ENCODE measurements at regions of chr2 and their contacts with region 1.

Region 1: DNA sequence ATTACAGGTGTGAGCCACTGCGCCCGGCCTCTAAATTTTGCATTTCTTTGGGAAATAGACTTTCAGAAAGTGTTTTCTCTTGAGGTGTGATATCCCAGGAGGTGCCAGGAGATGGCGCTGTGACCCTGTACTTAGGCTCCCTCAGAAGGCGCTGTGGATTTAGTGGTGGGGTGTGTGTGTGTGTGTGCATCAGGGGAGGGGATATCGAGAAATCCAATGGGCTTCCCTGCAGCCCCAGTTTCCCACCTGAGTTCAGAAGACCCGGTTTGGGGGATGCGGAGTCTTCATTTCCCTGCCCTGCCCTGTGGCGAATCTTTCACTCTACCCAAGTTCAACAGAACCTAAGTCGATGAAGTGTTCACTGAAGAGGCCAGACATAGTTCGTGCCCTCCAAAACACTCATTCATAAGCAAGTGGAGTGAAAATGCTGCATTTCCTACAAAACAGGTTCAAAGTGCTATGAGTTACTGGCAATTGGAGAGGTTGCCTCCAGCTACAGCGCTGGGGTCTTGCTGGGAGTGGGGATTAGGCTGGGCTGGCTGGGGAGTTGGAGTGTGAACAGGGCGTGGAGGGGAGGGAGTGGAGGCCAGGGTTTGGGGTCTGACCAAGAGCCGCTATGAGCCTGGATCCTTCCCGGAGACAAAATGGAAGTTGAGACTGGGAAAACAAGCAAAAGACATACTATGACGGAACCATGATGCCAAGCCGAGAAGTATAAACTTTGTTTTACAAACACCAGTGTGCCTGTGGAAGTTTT is 6.5 kb upstream of the WNT6 start:
- DNase-seq: peak; percentile 74
- ATAC-seq: peak; percentile 52
- H3K4me3 Mint-ChIP-seq: no peak overlapping the region
- H3K27ac Mint-ChIP-seq: no peak overlapping the region
- H3K4me1 Mint-ChIP-seq: no peaks in the 10 kb centered on the region
- H3K27me3 Mint-ChIP-seq: peaks cover 52% of the 10 kb centered on the region

Region 2: DNA sequence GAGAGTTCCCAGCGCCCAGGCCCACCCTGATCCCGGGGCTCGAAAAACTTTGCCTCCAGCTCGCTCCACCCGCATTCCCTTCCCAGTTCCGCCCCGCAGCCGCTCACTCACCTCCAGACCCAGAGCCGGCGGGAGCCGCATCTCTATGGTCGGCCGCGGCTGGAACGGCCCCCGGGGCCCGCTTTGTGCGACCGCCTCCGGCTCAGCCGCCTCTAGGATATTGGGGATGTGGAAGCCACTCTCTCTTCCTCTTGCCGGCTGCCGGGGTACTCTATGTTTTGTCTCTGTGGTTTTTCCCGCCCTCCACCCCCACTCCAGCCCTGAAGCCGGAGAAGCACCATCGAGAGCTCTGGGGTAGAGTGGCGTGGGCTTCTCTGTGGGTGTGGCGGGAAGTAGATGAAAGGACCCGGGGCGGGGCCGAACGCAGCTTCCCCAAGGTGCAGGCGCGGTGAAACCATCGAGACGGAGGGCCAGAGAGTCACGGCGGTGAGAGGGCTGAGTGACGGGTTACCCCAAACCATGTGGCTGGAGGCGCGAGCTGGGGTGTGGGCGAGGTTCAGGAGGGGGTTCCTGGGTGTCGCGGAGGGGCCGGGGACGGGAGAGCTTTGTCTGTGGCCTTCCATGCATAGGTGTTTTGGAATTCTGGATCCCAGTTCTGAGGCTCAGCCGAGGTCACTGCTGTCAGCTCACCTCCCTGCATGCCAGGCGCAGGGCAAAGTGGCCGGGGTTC is 193.7 kb before region 1 on chr2 and contains the starts of genes BCS1L and ZNF142:
- CTCF ChIA-PET with region 1: interaction called, 62 read pairs
- POLR2A ChIA-PET with region 1: no interaction called
- DNase-seq: peak; percentile 97
- ATAC-seq: peak; percentile 96
- H3K4me3 Mint-ChIP-seq: peak within 1 kb of the TSS; percentile 90
- H3K27ac Mint-ChIP-seq: peak within 1 kb of the TSS; percentile 90
- H3K4me1 Mint-ChIP-seq: peaks cover 31% of the 10 kb centered on the region
- H3K27me3 Mint-ChIP-seq: no peaks in the 10 kb centered on the region
- total RNA-seq, gene BCS1L: 50.1 to 50.5 TPM
- total RNA-seq, gene ZNF142: 49.2 to 53.1 TPM

Region 3: DNA sequence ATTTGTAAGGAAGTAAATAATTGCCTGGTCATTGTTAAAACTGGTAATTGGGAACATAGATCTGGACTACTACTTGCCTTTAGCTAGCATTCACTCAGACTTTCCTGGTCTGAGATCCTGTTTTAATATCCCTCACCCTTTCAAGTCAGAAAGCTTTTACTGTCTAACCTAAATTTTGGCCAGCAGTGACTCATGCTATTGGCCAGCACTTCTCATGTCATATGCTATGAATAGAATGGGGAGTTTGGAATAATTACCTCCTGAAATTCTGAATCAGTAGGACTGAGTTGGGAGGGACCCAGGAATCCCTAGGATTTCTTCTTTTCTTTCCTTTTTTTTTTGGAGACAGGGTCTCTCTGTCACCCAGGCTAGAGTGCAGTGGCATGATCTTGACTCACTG is 161.9 kb before region 1 on chr2:
- CTCF ChIA-PET with region 1: interaction called, 14 read pairs
- POLR2A ChIA-PET with region 1: no interaction called
- DNase-seq: no peak
- ATAC-seq: no peak
- H3K4me3 Mint-ChIP-seq: no peak overlapping the region
- H3K27ac Mint-ChIP-seq: no peak overlapping the region
- H3K4me1 Mint-ChIP-seq: peaks cover 2% of the 10 kb centered on the region
- H3K27me3 Mint-ChIP-seq: no peaks in the 10 kb centered on the region

Region 4: DNA sequence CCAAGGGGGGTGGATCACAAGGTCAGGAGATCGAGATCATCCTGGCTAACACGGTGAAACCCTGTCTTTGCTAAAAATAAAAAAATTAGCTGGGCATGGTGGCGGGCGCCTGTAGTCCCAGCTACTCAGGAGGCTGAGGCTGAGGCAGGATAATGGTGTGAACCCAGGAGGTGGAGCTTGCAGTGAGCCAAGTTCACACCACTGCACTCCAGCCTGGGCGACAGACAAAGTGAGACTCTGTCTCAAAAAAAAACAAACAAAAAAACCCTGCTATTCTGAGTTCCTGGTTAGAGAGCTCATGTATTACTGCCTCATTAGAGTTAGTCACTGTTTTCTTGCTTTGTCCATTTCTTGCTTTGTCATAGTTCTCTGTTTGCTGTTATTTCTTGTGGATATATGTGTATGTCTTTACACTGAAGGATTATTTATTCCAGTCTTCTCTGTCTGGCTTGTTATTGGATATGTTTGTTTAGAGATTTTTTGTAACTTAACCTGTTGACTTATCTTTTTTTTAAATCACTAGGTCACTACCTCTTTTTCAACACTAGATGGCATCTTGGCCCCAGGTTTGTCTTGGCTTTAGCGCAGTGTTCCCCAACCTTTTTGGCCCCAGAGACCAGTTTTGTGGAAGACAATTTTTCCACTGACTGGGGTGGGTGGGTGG is 125.5 kb before region 1 on chr2:
- CTCF ChIA-PET with region 1: interaction called, 34 read pairs
- POLR2A ChIA-PET with region 1: no interaction called
- DNase-seq: no peak
- ATAC-seq: no peak
- H3K4me3 Mint-ChIP-seq: no peak overlapping the region
- H3K27ac Mint-ChIP-seq: no peak overlapping the region
- H3K4me1 Mint-ChIP-seq: peaks cover 13% of the 10 kb centered on the region
- H3K27me3 Mint-ChIP-seq: no peaks in the 10 kb centered on the region

Region 5: DNA sequence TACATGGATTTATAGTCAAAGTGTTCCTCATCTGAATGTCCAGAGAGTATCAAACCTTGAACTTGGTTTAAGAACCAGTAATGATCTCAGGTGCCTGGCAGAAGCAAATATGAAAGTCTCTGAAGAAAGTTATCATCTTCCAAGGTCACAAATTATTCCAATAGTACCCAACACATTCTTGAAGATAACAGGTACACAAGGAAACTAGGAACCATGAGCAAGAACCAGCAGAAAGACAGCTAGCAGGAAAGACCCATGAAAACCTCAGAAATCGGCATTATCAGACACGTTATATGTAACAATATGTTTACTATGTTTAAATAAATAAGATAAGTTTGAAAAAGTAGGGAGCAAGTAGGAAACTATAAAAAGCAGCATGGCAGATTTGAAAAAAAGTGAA is 15.6 kb before region 1 on chr2:
- CTCF ChIA-PET with region 1: interaction called, 11 read pairs
- POLR2A ChIA-PET with region 1: no interaction called
- DNase-seq: no peak
- ATAC-seq: no peak
- H3K4me3 Mint-ChIP-seq: no peak overlapping the region
- H3K27ac Mint-ChIP-seq: no peak overlapping the region
- H3K4me1 Mint-ChIP-seq: no peaks in the 10 kb centered on the region
- H3K27me3 Mint-ChIP-seq: peaks cover 41% of the 10 kb centered on the region

Region 6: DNA sequence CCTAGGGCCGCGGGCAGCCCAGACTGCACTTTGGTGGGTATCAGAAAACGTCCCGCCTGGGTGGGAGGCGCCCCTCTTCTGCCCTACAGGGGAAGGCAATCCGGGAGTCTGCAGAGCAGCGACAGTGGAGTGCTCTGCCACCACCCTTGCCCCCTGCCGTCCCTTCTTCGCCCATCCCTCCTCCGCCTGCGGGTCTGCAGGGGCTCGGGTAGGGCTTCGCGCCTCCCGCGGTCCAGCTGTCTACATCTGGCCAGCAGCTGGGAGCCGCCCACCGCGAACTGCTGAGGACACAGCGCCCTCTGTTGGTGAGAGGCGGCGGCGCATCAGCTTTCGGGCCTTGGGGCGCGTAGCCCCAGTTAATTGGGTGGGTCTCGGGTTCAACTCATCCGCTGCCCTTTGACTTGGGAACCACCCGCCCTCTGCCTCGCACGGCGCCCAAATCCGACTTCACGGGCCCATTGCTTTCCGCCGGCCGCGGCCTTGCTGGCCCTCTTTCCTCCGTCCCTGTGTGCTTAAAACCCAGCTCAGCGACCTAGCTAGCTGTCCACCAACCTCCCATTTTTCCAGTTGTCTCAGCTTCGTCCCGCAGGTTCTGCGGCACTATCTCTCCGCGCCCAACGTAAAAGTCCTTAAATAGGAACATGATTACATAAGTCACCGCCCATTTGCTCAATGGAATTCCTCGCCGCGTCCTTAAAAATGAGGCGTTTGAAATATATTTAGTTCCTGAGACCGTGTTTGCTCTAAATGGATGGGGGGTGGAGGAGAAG is 45.2 kb after region 1 on chr2:
- CTCF ChIA-PET with region 1: interaction called, 83 read pairs
- POLR2A ChIA-PET with region 1: no interaction called
- DNase-seq: peak; percentile 84
- ATAC-seq: peak; percentile 30
- H3K4me3 Mint-ChIP-seq: peak overlapping the region; percentile 45
- H3K27ac Mint-ChIP-seq: no peak overlapping the region
- H3K4me1 Mint-ChIP-seq: peaks cover 42% of the 10 kb centered on the region
- H3K27me3 Mint-ChIP-seq: peaks cover 54% of the 10 kb centered on the region

Region 7: DNA sequence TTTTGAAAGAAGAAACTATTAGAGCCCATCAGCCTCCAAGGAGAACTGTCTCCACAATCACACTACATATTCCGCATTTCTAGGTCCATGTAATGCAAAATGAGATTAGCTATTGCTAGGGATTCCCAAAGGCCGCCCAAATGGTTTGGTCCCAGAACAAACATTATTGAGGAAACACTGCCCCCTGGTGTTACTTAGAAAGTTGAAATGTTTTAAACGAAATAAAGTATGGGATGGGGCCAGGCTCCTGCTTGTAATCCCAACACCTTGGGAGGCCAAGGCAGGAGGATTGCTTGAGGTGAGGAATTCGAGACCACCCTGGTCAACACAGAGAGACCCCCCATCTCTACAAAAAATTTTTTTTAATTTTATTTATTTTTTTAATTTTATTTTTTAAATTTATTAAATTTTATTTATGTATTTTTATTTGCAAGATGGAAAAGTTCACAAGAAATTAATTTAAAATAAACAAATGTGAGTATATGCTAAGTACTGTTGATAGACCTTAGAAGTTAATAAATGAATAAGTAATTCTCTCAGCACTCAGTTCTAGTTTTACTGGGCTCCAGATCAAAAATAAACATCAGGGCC is 302.1 kb after region 1 on chr2:
- CTCF ChIA-PET with region 1: no interaction called
- POLR2A ChIA-PET with region 1: no interaction called
- DNase-seq: peak; percentile 53
- ATAC-seq: no peak
- H3K4me3 Mint-ChIP-seq: no peak overlapping the region
- H3K27ac Mint-ChIP-seq: no peak overlapping the region
- H3K4me1 Mint-ChIP-seq: peaks cover 12% of the 10 kb centered on the region
- H3K27me3 Mint-ChIP-seq: no peaks in the 10 kb centered on the region